Prostate gland (tissue), 2 donors: ENCODE measurements at regions of chr12 and their contacts with region 1.

Region 1: GRCh38 chr12:44930972-44931600 is 55.0 kb upstream of the NELL2 start:
- DNase-seq: no peak
- H3K4me3 ChIP-seq: no peak overlapping the region
- H3K27ac ChIP-seq: no peak overlapping the region
- H3K4me1 ChIP-seq: no peaks in the 10 kb centered on the region
- H3K27me3 ChIP-seq: no peaks in the 10 kb centered on the region
- CTCF ChIP-seq: peak; percentile 16 to 77 (median 59)
- POLR2A ChIP-seq: no peak

Region 2: GRCh38 chr12:44015335-44015941 is 915.6 kb before region 1 on chr12:
- intact Hi-C with region 1: loop called (anchors 2 kb)
- DNase-seq: no peak
- H3K4me3 ChIP-seq: no peak overlapping the region
- H3K27ac ChIP-seq: no peak overlapping the region
- H3K4me1 ChIP-seq: no peaks in the 10 kb centered on the region
- H3K27me3 ChIP-seq: no peaks in the 10 kb centered on the region
- CTCF ChIP-seq: peak in 3 of 4 experiments; percentile 45 to 57 (median 45)
- POLR2A ChIP-seq: no peak

Region 3: GRCh38 chr12:44863867-44864266 is 67.2 kb before region 1 on chr12:
- intact Hi-C with region 1: no loop called
- DNase-seq: no peak
- H3K4me3 ChIP-seq: no peak overlapping the region
- H3K27ac ChIP-seq: no peak overlapping the region
- H3K4me1 ChIP-seq: no peaks in the 10 kb centered on the region
- H3K27me3 ChIP-seq: no peaks in the 10 kb centered on the region
- CTCF ChIP-seq: no peak
- POLR2A ChIP-seq: no peak

Region 4: GRCh38 chr12:44972746-44973421 is 41.8 kb after region 1 on chr12:
- intact Hi-C with region 1: no loop called
- DNase-seq: no peak
- H3K4me3 ChIP-seq: no peak overlapping the region
- H3K27ac ChIP-seq: no peak overlapping the region
- H3K4me1 ChIP-seq: no peaks in the 10 kb centered on the region
- H3K27me3 ChIP-seq: no peaks in the 10 kb centered on the region
- CTCF ChIP-seq: no peak
- POLR2A ChIP-seq: no peak

Region 5: DNA sequence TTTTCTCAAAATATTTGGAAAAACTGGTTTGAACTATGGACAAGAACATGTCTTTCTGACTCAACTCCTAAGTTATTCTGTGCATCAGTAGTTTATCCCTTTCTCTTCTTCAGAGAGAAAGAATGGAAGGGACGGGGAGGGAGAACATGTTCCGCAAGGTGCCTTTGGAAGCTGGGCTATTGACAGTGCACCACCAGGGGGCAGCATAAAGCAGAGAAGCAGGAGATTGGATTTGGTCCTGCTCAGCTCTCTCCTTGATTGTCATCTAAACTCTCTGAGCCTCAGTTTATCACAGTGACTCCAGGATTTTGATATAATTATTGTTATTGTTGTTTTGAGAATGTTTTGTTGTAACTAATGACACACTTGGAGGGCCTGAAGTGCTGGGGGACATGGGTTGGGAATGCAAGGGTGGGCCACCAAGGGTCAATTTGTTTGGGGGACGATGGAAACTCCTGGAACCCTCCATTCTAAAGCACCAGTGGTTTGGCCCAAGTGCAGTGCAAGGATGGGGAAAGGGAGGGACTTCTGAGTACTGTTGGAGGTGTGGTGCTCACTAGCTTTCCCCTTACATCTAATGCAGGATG is 239.5 kb after region 1 on chr12:
- intact Hi-C with region 1: no loop called
- DNase-seq: peak; percentile 77
- H3K4me3 ChIP-seq: no peak overlapping the region
- H3K27ac ChIP-seq: no peak overlapping the region
- H3K4me1 ChIP-seq: no peaks in the 10 kb centered on the region
- H3K27me3 ChIP-seq: no peaks in the 10 kb centered on the region
- CTCF ChIP-seq: peak; percentile 72 to 82 (median 74)
- POLR2A ChIP-seq: no peak

Region 6: DNA sequence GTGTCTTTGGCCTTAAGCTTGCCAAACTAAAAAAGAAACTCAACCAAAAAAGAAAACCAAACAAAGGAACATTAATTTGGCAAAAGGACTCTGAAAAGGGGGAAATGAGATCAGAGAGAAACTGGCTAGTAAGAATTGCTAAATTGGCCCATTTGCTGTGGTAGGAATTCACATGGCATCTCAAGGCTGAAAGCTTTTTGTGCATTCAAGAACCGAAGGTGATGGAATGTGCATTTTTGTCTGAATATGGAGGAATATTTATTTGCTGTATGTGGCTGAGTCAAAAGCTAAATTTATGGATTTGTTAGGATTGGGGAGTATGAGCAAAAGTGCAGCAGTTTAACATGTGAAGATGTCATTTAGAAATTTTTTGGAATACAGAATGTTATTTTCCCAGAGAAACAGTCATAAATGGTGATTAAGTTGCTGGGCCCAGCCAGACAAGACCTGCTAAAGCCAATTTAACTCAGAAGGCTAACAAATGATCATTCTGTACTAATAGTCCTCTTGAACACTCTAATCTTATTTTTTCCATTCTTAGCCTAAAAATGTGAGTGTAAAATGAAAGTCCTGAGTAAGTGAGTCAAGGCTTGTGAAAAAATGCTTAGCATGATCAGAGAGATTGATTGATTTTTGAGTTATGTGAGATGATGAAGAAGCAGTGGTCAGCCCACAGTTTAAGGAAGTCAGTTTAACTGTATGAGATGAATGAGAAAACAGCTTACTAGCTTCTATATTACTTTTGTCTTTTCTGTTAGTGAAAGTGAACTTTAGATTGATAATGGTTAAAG is 378.9 kb after region 1 on chr12:
- intact Hi-C with region 1: no loop called
- DNase-seq: no peak
- H3K4me3 ChIP-seq: no peak overlapping the region
- H3K27ac ChIP-seq: no peak overlapping the region
- H3K4me1 ChIP-seq: no peaks in the 10 kb centered on the region
- H3K27me3 ChIP-seq: no peaks in the 10 kb centered on the region
- CTCF ChIP-seq: no peak
- POLR2A ChIP-seq: no peak